Activated CD8-positive, alpha-beta T cell treated with anti-CD3 and anti-CD28 coated beads, Interleukin-2, amount 10 ng/mL, durations not matched to agents 7 days and 5 days (primary cell): ENCODE measurements at regions of chr6 and their contacts with region 1.

Region 1: GRCh38 chr6:138517635-138518034 is 18.3 kb upstream of the NHSL1 start:
- DNase-seq: peak; percentile 74
- ATAC-seq: peak; percentile 77
- H3K4me3 Mint-ChIP-seq: no peak overlapping the region
- H3K27ac Mint-ChIP-seq: no peak overlapping the region
- H3K4me1 Mint-ChIP-seq: peaks cover 39% of the 10 kb centered on the region
- H3K27me3 Mint-ChIP-seq: peaks cover 9% of the 10 kb centered on the region

Region 2: GRCh38 chr6:138115877-138116660 is 401.6 kb before region 1 on chr6:
- CTCF ChIA-PET with region 1: interaction called, 14 read pairs
- POLR2A ChIA-PET with region 1: no interaction called
- DNase-seq: peak; percentile 58
- ATAC-seq: peak; percentile 83
- H3K4me3 Mint-ChIP-seq: no peak overlapping the region
- H3K27ac Mint-ChIP-seq: no peak overlapping the region
- H3K4me1 Mint-ChIP-seq: peaks cover 6% of the 10 kb centered on the region
- H3K27me3 Mint-ChIP-seq: peaks cover 49% of the 10 kb centered on the region

Region 3: GRCh38 chr6:138403801-138404661 is 113.6 kb before region 1 on chr6 and contains the start of gene HEBP2:
- CTCF ChIA-PET with region 1: interaction called, 11 read pairs
- POLR2A ChIA-PET with region 1: no interaction called
- DNase-seq: peak; percentile 97
- ATAC-seq: peak; percentile 95
- H3K4me3 Mint-ChIP-seq: peak within 1 kb of the TSS; percentile 84
- H3K27ac Mint-ChIP-seq: peak within 1 kb of the TSS; percentile 79
- H3K4me1 Mint-ChIP-seq: peaks cover 21% of the 10 kb centered on the region
- H3K27me3 Mint-ChIP-seq: peaks cover 8% of the 10 kb centered on the region
- total RNA-seq, gene HEBP2: 40.8 to 43.5 TPM

Region 4: GRCh38 chr6:138428944-138429598 is 88.6 kb before region 1 on chr6:
- CTCF ChIA-PET with region 1: interaction called, 70 read pairs
- POLR2A ChIA-PET with region 1: no interaction called
- DNase-seq: peak; percentile 34
- ATAC-seq: peak; percentile 58
- H3K4me3 Mint-ChIP-seq: no peak overlapping the region
- H3K27ac Mint-ChIP-seq: no peak overlapping the region
- H3K4me1 Mint-ChIP-seq: peaks cover 2% of the 10 kb centered on the region
- H3K27me3 Mint-ChIP-seq: no peaks in the 10 kb centered on the region

Region 5: GRCh38 chr6:138455746-138456400 is 61.8 kb before region 1 on chr6:
- CTCF ChIA-PET with region 1: interaction called, 10 read pairs
- POLR2A ChIA-PET with region 1: no interaction called
- DNase-seq: peak; percentile 51
- ATAC-seq: peak; percentile 83
- H3K4me3 Mint-ChIP-seq: peak overlapping the region; percentile 58
- H3K27ac Mint-ChIP-seq: peak overlapping the region; percentile 91
- H3K4me1 Mint-ChIP-seq: peaks cover 29% of the 10 kb centered on the region
- H3K27me3 Mint-ChIP-seq: peaks cover 2% of the 10 kb centered on the region